CD8-positive, alpha-beta memory T cell (primary cell): ENCODE measurements at regions of chr1 and their contacts with region 1.

Region 1: DNA sequence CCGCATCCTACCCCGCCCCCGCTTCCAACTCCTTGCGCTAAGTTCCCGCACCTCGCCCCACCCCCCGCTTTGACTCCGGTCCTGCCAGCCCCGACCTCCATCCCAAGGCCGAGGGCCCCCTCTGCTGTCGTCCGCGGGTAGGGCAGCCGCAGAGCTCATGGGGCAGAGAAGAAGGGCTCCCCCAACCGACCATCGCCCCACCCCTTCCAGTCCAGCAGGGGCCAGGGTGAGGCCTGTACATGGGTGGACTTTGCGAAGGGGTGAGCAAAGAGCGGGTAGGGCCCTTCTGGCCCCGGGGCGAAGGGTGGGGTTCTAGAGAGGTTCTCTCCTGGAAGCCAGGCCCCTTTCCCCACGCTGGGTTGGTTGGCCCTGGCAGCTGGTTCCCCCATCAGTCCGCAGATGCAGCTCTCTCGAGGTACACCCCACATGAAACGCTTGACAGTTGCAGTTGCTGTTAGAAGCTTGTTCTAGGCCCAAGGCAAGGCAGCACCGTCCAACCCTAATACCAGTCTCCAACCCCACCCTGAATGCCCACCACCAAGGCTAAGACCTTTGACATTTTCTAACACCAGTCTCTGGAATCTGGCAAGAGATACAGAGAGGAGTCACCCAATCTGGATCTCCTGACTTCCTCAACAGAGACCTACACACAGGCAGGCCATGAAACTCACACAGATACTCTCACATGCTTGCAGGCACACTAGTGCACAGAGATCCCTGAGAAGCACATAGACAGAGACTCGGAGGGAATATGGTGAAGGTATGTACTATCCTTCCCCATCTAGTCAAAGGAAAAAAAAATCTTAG is 25.3 kb upstream of the ADGRB2 start:
- DNase-seq: peak; percentile 86 to 96 (median 92)
- H3K4me3 ChIP-seq: peak overlapping the region; percentile 90
- H3K4me3 Mint-ChIP-seq: peak overlapping the region; percentile 90 to 96 (median 92)
- H3K27ac ChIP-seq: no peak overlapping the region
- H3K27ac Mint-ChIP-seq: peak overlapping the region; percentile 50 to 99 (median 98)
- H3K4me1 ChIP-seq: peaks cover 6% of the 10 kb centered on the region
- H3K4me1 Mint-ChIP-seq: peaks cover 7 to 16% (median 10%) of the 10 kb centered on the region in 3 donors
- H3K27me3 ChIP-seq: no peaks in the 10 kb centered on the region
- H3K27me3 Mint-ChIP-seq: no peaks in the 10 kb centered on the region

Region 2: GRCh38 chr1:31564134-31564989 is 225.1 kb before region 1 on chr1:
- CTCF ChIA-PET with region 1: interaction called, 11 read pairs
- POLR2A ChIA-PET with region 1: interaction called, 3 read pairs
- DNase-seq: peak in 4 of 5 donors; percentile 16 to 36 (median 26)
- H3K4me3 ChIP-seq: no peak overlapping the region
- H3K4me3 Mint-ChIP-seq: no peak overlapping the region
- H3K27ac ChIP-seq: no peak overlapping the region
- H3K27ac Mint-ChIP-seq: no peak overlapping the region
- H3K4me1 ChIP-seq: no peaks in the 10 kb centered on the region
- H3K4me1 Mint-ChIP-seq: no peaks in the 10 kb centered on the region
- H3K27me3 ChIP-seq: no peaks in the 10 kb centered on the region
- H3K27me3 Mint-ChIP-seq: peaks cover 34 to 67% of the 10 kb centered on the region in 2 donors

Region 3: GRCh38 chr1:31663622-31664452 is 125.6 kb before region 1 on chr1:
- CTCF ChIA-PET with region 1: interaction called, 89 read pairs
- POLR2A ChIA-PET with region 1: no interaction called
- DNase-seq: peak; percentile 43 to 64 (median 54)
- H3K4me3 ChIP-seq: no peak overlapping the region
- H3K4me3 Mint-ChIP-seq: no peak overlapping the region
- H3K27ac ChIP-seq: no peak overlapping the region
- H3K27ac Mint-ChIP-seq: peak overlapping the region in 1 of 8 donors; percentile 3
- H3K4me1 ChIP-seq: no peaks in the 10 kb centered on the region
- H3K4me1 Mint-ChIP-seq: no peaks in the 10 kb centered on the region
- H3K27me3 ChIP-seq: no peaks in the 10 kb centered on the region
- H3K27me3 Mint-ChIP-seq: peaks cover 1 to 5% of the 10 kb centered on the region in 2 donors

Region 4: GRCh38 chr1:31762726-31763670 is 26.5 kb before region 1 on chr1:
- CTCF ChIA-PET with region 1: interaction called, 54 read pairs
- POLR2A ChIA-PET with region 1: interaction called, 4 read pairs
- DNase-seq: peak; percentile 60 to 78 (median 67)
- H3K4me3 ChIP-seq: peak overlapping the region; percentile 60
- H3K4me3 Mint-ChIP-seq: peak overlapping the region; percentile 79 to 92 (median 81)
- H3K27ac ChIP-seq: no peak overlapping the region
- H3K27ac Mint-ChIP-seq: peak overlapping the region in 2 of 8 donors; percentile 21 to 42
- H3K4me1 ChIP-seq: peaks cover 32% of the 10 kb centered on the region
- H3K4me1 Mint-ChIP-seq: peaks cover 20 to 41% (median 22%) of the 10 kb centered on the region in 3 donors
- H3K27me3 ChIP-seq: peaks cover 18% of the 10 kb centered on the region
- H3K27me3 Mint-ChIP-seq: peaks cover 13 to 14% of the 10 kb centered on the region in 2 donors

Region 5: DNA sequence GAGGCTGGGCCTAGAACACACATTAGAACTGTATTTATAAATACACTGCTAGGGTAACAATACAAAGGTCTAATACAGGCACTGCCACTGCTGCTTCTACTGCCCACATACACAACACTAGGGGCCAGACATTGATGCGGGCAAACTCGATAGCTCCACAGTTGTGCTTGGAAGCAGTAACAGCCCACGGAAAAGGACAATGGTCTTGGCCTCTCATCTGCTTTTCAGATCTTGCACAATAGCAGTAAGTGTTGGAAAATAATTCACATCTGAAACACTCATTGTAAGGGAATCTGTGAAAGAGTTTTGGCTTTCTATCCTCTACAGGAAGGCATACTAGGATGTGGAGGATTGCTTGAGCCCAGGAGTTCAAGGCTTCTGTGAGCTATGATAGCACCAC is 33.3 kb after region 1 on chr1:
- CTCF ChIA-PET with region 1: no interaction called
- POLR2A ChIA-PET with region 1: no interaction called
- DNase-seq: no peak
- H3K4me3 ChIP-seq: no peak overlapping the region
- H3K4me3 Mint-ChIP-seq: peak overlapping the region in 1 of 7 donors; percentile 36
- H3K27ac ChIP-seq: no peak overlapping the region
- H3K27ac Mint-ChIP-seq: peak overlapping the region in 1 of 8 donors; percentile 24
- H3K4me1 ChIP-seq: peaks cover 21% of the 10 kb centered on the region
- H3K4me1 Mint-ChIP-seq: peaks cover 17 to 19% (median 19%) of the 10 kb centered on the region in 3 donors
- H3K27me3 ChIP-seq: no peaks in the 10 kb centered on the region
- H3K27me3 Mint-ChIP-seq: no peaks in the 10 kb centered on the region

Region 6: DNA sequence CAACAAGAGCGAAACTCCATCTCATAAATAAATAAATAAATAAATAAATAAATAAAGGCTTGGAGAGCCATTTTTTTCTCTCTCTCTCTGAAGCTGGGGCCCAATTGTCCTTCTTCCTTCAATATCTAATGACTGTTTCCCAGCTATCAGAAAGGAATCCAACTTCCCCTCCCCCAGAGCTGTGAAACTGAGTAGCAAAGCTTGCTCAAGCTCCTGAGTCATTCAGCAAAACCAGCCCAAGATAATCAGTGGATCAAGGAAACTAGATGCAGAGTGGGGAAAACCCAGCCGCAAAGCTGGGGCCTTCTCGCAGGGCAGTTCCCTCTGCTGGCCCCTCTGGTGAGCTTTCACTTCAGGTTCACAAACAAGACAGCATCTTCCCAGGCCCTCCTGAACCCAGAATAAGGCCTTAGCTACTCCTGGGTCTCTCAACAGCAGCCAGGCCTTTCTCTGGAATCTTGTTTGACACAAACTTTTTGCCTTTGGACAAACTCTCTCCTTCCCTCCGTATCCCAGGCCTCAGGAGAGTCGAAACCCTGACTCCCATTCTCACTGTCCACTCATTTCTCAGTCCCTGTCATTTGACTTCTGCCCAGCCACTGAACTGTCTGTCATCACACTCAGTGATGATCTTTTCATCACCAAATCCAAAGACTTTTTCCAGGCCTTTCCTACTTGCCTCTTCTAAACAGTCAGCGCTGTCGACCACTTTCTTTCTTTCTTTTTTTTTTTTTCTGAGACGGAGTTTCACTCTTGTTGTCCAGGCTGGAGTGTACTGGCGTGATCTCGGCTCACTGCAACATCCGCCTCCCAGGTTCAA is 166.7 kb after region 1 on chr1:
- CTCF ChIA-PET with region 1: interaction called, 14 read pairs
- POLR2A ChIA-PET with region 1: no interaction called
- DNase-seq: peak; percentile 32 to 87 (median 69)
- H3K4me3 ChIP-seq: peak overlapping the region; percentile 0
- H3K4me3 Mint-ChIP-seq: peak overlapping the region; percentile 16 to 75 (median 57)
- H3K27ac ChIP-seq: peak overlapping the region; percentile 56
- H3K27ac Mint-ChIP-seq: peak overlapping the region; percentile 68 to 94 (median 91)
- H3K4me1 ChIP-seq: peaks cover 45% of the 10 kb centered on the region
- H3K4me1 Mint-ChIP-seq: peaks cover 43 to 84% (median 72%) of the 10 kb centered on the region in 3 donors
- H3K27me3 ChIP-seq: no peaks in the 10 kb centered on the region
- H3K27me3 Mint-ChIP-seq: no peaks in the 10 kb centered on the region